ENCODE measurements at regions of chr16 and their contacts with region 1.

Region 1: DNA sequence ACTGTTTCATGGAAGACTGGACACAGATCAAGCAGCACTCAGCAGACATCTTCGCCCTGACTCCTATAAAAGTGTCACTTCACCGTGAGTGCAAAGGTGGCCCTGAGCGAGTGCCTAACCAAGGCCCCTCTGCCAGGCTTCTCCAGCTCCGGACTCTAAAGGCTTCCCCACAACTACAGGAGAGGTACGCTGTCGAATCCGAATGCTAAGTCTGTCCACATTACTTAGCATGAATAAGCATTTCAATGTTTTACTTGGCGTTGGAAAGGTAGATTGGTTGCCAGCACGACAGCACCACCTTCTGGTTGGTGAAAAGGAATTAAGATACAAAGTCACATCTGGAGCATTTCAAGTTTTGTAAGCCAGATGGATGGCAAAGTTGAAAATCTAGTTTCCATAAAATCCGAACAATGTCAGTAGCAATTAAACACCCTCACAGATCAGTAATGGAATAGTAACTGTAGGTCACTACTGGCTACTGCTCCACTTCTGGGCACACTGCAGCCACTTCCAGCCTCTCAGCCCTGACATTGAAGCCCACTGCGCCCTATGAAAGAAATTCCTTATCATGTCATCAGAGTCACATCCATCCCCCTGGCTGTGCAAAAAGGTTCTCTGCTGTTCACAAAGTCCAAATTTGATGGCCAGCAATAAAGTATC is 100.9 kb downstream of the PARN start:
- DNase-seq: peak; percentile 78
- H3K4me3 ChIP-seq: peak overlapping the region in 1 of 4 donors; percentile 28
- H3K27ac ChIP-seq: peak overlapping the region in 2 of 4 donors; percentile 6 to 35
- H3K4me1 ChIP-seq: peaks cover 0 to 15% (median 6%) of the 10 kb centered on the region in 4 donors
- H3K27me3 ChIP-seq: no peaks in the 10 kb centered on the region
- CTCF ChIP-seq: peak; percentile 61 to 81 (median 69)
- EP300 ChIP-seq: no peak
- POLR2A ChIP-seq: no peak

Region 2: DNA sequence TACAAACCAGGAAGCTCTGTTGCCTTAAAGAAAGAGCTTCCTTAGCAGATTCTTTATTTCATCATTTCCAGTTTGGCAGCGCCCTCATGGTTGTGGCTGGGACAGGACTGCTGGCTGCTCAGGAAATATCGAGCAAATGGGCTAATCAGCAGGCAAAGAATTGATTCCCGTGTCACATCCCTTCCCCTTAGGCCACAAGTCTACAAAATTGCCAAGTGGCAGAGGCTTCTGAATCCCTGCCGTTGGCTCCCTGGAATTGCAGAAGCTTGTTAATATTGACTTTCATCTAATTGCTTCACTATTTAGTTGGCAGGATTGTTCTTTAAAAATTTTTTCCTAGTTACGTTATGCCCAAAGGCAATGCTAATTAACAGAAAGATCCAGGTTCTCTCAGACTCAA is 1065.5 kb before region 1 on chr16:
- in situ Hi-C with region 1: no loop called
- intact Hi-C with region 1: no loop called
- DNase-seq: no peak
- H3K4me3 ChIP-seq: no peak overlapping the region
- H3K27ac ChIP-seq: no peak overlapping the region
- H3K4me1 ChIP-seq: no peaks in the 10 kb centered on the region
- H3K27me3 ChIP-seq: no peaks in the 10 kb centered on the region
- CTCF ChIP-seq: no peak
- EP300 ChIP-seq: no peak
- POLR2A ChIP-seq: no peak

Region 3: GRCh38 chr16:13919683-13920509 is 609.2 kb before region 1 on chr16 and contains the start of gene ERCC4:
- in situ Hi-C with region 1: loop called in 3 of 4 experiments (anchors 25 kb)
- intact Hi-C with region 1: loop called (anchors 10 kb)
- DNase-seq: peak; percentile 99
- H3K4me3 ChIP-seq: peak within 1 kb of the TSS; percentile 83 to 98 (median 92)
- H3K27ac ChIP-seq: peak within 1 kb of the TSS; percentile 83 to 92 (median 86)
- H3K4me1 ChIP-seq: peaks cover 6 to 24% (median 12%) of the 10 kb centered on the region in 4 donors
- H3K27me3 ChIP-seq: no peaks in the 10 kb centered on the region
- CTCF ChIP-seq: peak; percentile 83 to 98 (median 87)
- EP300 ChIP-seq: no peak
- POLR2A ChIP-seq: peak; percentile 62
- total RNA-seq, gene ERCC4: 3.8 to 14.1 (median 4.8) TPM

Region 4: GRCh38 chr16:13935408-13935807 is 593.7 kb before region 1 on chr16:
- in situ Hi-C with region 1: loop called in 2 of 4 experiments (anchors 25 kb)
- intact Hi-C with region 1: no loop called
- DNase-seq: no peak
- H3K4me3 ChIP-seq: no peak overlapping the region
- H3K27ac ChIP-seq: no peak overlapping the region
- H3K4me1 ChIP-seq: peaks cover 0 to 6% (median 0%) of the 10 kb centered on the region in 4 donors
- H3K27me3 ChIP-seq: no peaks in the 10 kb centered on the region
- CTCF ChIP-seq: peak in 2 of 5 experiments; percentile 13 to 32
- EP300 ChIP-seq: no peak
- POLR2A ChIP-seq: no peak

Region 5: DNA sequence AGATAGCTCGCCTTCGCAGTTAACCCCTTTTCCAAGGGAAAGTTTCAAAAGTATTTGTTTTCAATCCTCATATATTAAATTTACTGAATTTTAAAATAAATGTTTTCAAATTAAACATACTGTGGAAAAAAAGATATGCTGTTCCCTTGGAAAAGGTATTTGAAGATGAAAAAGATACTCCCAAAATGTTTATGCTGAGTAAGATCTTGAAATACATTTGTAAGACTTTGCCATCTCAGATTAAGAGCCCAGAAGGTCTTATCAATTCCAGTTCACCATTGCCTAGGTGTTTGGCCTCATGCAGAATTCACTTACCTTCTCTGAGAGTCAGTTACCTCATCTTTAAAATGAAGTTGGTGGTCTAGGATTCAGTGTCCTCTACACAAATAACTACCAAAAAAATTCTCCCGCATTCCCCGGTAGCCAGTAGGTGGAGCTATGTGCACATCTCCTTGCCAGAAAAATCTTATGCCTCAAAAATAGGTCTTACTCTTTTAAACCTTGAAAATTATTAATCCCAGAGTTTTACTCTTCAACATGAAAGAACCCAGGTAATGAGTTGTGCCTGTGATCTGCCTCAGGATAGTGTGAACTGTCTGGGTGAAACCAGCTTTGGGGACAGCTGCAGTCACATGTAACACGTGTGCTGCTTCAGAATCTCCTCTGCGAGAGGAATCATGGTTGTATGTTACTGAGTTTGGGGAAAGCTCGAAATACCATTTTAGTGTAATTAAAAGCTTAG is 279.7 kb before region 1 on chr16:
- in situ Hi-C with region 1: loop called in 1 of 4 experiments (anchors 10 kb)
- intact Hi-C with region 1: loop called (anchors 5 kb)
- DNase-seq: peak; percentile 35
- H3K4me3 ChIP-seq: no peak overlapping the region
- H3K27ac ChIP-seq: no peak overlapping the region
- H3K4me1 ChIP-seq: no peaks in the 10 kb centered on the region
- H3K27me3 ChIP-seq: no peaks in the 10 kb centered on the region
- CTCF ChIP-seq: peak; percentile 65 to 81 (median 76)
- EP300 ChIP-seq: no peak
- POLR2A ChIP-seq: no peak

Region 6: DNA sequence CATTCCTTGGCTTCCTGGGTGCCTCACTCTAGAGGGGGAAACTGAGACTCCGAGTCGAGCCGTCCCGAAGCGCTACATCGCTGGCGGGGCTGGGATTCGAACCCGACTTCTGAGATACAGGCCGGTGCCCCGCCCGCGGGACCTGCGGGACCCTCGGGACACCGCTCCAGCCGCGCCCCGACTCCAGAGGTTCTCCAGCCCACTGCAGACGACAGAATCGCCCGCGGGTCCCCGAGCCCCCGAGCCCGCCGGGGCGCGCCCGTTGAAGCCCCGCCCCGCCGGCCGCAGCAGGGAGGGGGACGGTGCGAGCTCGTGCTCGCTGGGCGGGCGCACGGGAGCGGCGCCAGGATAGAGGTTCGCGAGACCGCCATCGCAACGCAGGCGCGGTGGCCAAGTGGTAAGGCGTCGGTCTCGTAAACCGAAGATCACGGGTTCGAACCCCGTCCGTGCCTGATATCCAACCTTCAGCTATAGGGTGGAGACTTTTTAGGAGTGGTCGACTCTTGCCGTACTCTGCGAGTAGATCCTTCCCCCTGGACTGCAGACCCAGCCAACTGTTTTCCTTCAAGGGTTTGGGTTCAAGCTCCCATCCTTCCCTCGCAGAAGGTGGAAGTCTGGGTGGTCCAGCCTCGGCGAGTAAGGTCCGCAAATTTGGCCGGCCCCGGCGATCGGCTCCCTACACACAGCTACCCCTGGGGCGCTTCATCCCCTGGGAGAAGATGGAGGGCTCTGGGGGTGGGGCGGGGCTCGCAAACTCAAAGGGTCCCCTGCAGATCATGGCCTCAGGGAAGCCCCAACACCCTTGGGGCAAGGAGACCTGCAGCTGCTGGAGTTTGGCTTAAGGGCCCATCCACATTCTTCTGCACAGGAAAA is 243.4 kb before region 1 on chr16:
- in situ Hi-C with region 1: loop called in 2 of 4 experiments (anchors 10 to 25 kb)
- intact Hi-C with region 1: no loop called
- DNase-seq: peak; percentile 95
- H3K4me3 ChIP-seq: peak overlapping the region; percentile 77 to 90 (median 84)
- H3K27ac ChIP-seq: peak overlapping the region; percentile 86 to 91 (median 88)
- H3K4me1 ChIP-seq: peaks cover 0 to 16% (median 9%) of the 10 kb centered on the region in 4 donors
- H3K27me3 ChIP-seq: no peaks in the 10 kb centered on the region
- CTCF ChIP-seq: no peak
- EP300 ChIP-seq: no peak
- POLR2A ChIP-seq: no peak

Region 7: DNA sequence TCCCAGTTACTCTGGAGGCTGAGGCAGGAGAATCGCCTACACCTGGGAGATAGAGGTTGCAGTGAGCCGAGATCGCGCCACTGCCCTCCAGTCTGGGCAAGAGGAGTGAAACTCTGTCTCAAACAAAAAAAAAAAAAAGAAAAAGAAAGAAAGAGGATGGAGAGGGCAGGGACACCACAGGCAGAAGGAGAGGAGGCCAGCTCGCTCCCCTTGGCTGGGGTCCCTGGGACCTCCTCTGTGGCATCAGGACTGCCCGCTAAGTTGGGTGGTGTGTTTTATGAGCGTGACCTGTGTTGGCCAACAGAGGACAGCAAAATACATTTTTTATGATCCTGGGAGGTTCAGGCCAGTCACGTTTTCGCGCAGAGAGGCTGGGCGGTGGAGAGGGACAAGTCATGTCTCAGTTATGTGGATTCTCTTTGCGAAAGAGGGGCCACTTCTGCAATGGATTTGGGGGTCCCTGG is 228.4 kb before region 1 on chr16:
- in situ Hi-C with region 1: loop called (anchors 10 to 25 kb)
- intact Hi-C with region 1: loop called (anchors 2 kb)
- DNase-seq: peak; percentile 69
- H3K4me3 ChIP-seq: peak overlapping the region in 1 of 4 donors; percentile 68
- H3K27ac ChIP-seq: peak overlapping the region; percentile 76 to 89 (median 82)
- H3K4me1 ChIP-seq: peaks cover 5 to 26% (median 12%) of the 10 kb centered on the region in 4 donors
- H3K27me3 ChIP-seq: peaks cover 23% of the 10 kb centered on the region
- CTCF ChIP-seq: peak; percentile 33 to 58 (median 43)
- EP300 ChIP-seq: no peak
- POLR2A ChIP-seq: no peak